Transverse colon (tissue), 4 donors: ENCODE measurements at regions of chr10 and their contacts with region 1.

Region 1: GRCh38 chr10:72364239-72364777 is 9.6 kb upstream of the DNAJB12 start:
- DNase-seq: peak; percentile 86
- H3K4me3 ChIP-seq: no peak overlapping the region
- H3K27ac ChIP-seq: peak overlapping the region in 1 of 4 donors; percentile 31
- H3K4me1 ChIP-seq: peaks cover 0 to 10% (median 5%) of the 10 kb centered on the region in 4 donors
- H3K27me3 ChIP-seq: no peaks in the 10 kb centered on the region
- CTCF ChIP-seq: peak; percentile 84 to 96 (median 88)
- EP300 ChIP-seq: no peak
- POLR2A ChIP-seq: no peak

Region 2: GRCh38 chr10:72079356-72079755 is 285.0 kb before region 1 on chr10:
- in situ Hi-C with region 1: no loop called
- intact Hi-C with region 1: no loop called
- DNase-seq: no peak
- H3K4me3 ChIP-seq: no peak overlapping the region
- H3K27ac ChIP-seq: no peak overlapping the region
- H3K4me1 ChIP-seq: no peaks in the 10 kb centered on the region
- H3K27me3 ChIP-seq: no peaks in the 10 kb centered on the region
- CTCF ChIP-seq: no peak
- EP300 ChIP-seq: no peak
- POLR2A ChIP-seq: no peak

Region 3: GRCh38 chr10:72593963-72594362 is 229.7 kb after region 1 on chr10:
- in situ Hi-C with region 1: no loop called
- intact Hi-C with region 1: no loop called
- DNase-seq: no peak
- H3K4me3 ChIP-seq: no peak overlapping the region
- H3K27ac ChIP-seq: no peak overlapping the region
- H3K4me1 ChIP-seq: peaks cover 0 to 7% (median 0%) of the 10 kb centered on the region in 4 donors
- H3K27me3 ChIP-seq: no peaks in the 10 kb centered on the region
- CTCF ChIP-seq: no peak
- EP300 ChIP-seq: no peak
- POLR2A ChIP-seq: no peak

Region 4: DNA sequence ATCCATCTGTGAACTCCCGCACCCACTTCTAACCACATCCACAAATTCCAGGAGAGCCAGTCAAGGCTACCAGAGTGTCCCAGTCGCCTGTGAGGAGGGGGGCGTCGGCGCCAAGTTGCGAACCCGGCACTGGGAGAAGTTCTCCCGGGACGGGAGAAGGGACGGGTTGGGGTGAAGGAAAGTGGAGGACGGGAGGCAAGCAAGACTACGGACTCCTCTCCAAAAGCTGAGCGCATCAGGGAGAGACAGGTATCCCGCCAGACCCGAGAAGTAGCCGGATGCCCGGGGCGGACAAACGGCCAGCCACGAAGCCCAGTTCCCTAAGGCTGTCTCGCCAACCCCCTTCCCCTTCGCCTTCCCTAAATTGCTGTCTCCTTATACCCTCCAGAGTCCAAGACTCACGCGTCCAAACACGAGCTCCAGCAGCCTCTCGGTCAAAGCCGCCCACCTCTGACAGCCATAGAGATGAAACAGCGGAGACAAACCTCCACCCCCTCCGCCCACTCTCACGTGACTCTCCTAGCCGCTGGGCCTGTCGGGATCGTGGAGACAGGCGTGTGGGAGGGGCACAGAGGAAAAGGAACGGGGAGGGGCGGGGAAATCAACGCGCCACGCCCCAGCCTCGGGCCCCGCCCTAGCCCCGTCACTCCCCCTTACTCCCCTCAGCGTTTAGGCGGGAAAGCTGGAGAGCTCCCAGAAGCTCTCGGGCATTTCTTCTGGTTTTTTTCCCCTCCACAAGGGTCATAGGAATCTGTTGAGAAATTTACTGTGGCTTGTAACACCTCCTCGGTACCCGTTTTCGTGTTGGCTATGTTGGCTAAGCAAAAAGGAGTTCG is 261.5 kb after region 1 on chr10 and contains the start of gene MICU1:
- in situ Hi-C with region 1: no loop called
- intact Hi-C with region 1: loop called (anchors 10 kb)
- DNase-seq: peak; percentile 97
- H3K4me3 ChIP-seq: peak within 1 kb of the TSS; percentile 73 to 98 (median 86)
- H3K27ac ChIP-seq: peak within 1 kb of the TSS; percentile 88 to 90 (median 89)
- H3K4me1 ChIP-seq: peaks cover 5 to 20% (median 12%) of the 10 kb centered on the region in 4 donors
- H3K27me3 ChIP-seq: no peaks in the 10 kb centered on the region
- CTCF ChIP-seq: no peak
- EP300 ChIP-seq: no peak
- POLR2A ChIP-seq: peak; percentile 85
- total RNA-seq, gene MICU1: 25.1 to 41.1 (median 34.9) TPM

Region 5: DNA sequence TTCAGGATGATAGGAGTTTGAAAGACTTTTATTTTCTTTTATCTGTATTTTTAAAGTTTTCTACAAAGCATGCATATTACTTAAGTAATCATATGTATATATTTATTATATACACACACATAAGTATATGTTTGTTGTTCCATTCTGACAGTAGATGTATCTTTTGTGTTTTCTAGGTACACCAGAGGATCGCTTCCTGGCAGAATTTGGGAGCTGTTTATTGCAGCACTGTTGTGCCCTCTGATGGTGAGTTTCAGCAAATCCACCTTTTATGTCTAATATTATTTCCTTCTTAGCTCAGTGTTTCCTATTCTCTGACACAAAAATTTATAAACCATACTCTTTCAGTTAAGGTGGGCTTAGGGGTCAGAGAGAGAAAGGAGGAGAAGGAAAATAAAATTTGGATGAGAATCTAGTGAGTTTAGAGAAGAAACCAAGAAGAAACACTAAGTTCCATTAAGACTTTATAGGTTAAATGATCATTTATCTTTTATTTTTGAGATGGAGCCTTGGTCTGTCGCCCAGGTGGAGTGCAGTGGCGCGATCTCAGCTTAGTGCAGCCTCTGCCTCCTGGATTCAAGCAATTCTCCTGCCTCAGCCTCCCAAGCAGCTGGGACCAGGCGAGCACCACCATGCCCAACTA is 470.0 kb after region 1 on chr10:
- in situ Hi-C with region 1: loop called (anchors 5 to 25 kb)
- intact Hi-C with region 1: loop called (anchors 5 kb)
- DNase-seq: no peak
- H3K4me3 ChIP-seq: no peak overlapping the region
- H3K27ac ChIP-seq: no peak overlapping the region
- H3K4me1 ChIP-seq: peaks cover 0 to 46% (median 0%) of the 10 kb centered on the region in 4 donors
- H3K27me3 ChIP-seq: no peaks in the 10 kb centered on the region
- CTCF ChIP-seq: peak; percentile 52 to 66 (median 53)
- EP300 ChIP-seq: no peak
- POLR2A ChIP-seq: no peak

Region 6: GRCh38 chr10:72875250-72876055 is 511.1 kb after region 1 on chr10:
- in situ Hi-C with region 1: loop called in 1 of 4 experiments (anchors 5 kb)
- intact Hi-C with region 1: no loop called
- DNase-seq: no peak
- H3K4me3 ChIP-seq: no peak overlapping the region
- H3K27ac ChIP-seq: no peak overlapping the region
- H3K4me1 ChIP-seq: no peaks in the 10 kb centered on the region
- H3K27me3 ChIP-seq: no peaks in the 10 kb centered on the region
- CTCF ChIP-seq: peak; percentile 20 to 40 (median 34)
- EP300 ChIP-seq: no peak
- POLR2A ChIP-seq: no peak

Region 7: DNA sequence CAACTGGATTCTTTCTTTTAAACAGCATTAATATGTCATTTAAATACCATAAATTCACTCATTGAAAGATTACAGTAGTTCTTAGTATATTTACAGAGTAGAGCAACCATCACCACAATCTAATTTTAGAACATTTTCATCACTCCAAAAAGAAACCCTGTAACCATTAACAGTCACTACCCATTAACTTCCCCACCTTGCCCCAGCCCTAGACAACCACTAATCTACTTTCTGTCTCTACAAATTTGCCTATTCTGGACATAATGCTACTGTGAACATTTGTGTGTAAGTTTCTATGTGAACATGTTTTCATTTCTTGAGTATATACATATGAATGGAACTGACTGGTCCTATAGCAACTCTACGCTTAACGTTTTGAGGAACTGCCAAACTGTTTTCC is 690.0 kb after region 1 on chr10:
- in situ Hi-C with region 1: loop called in 1 of 4 experiments (anchors 10 kb)
- intact Hi-C with region 1: no loop called
- DNase-seq: no peak
- H3K4me3 ChIP-seq: no peak overlapping the region
- H3K27ac ChIP-seq: no peak overlapping the region
- H3K4me1 ChIP-seq: no peaks in the 10 kb centered on the region
- H3K27me3 ChIP-seq: no peaks in the 10 kb centered on the region
- CTCF ChIP-seq: no peak
- EP300 ChIP-seq: no peak
- POLR2A ChIP-seq: no peak

Region 8: DNA sequence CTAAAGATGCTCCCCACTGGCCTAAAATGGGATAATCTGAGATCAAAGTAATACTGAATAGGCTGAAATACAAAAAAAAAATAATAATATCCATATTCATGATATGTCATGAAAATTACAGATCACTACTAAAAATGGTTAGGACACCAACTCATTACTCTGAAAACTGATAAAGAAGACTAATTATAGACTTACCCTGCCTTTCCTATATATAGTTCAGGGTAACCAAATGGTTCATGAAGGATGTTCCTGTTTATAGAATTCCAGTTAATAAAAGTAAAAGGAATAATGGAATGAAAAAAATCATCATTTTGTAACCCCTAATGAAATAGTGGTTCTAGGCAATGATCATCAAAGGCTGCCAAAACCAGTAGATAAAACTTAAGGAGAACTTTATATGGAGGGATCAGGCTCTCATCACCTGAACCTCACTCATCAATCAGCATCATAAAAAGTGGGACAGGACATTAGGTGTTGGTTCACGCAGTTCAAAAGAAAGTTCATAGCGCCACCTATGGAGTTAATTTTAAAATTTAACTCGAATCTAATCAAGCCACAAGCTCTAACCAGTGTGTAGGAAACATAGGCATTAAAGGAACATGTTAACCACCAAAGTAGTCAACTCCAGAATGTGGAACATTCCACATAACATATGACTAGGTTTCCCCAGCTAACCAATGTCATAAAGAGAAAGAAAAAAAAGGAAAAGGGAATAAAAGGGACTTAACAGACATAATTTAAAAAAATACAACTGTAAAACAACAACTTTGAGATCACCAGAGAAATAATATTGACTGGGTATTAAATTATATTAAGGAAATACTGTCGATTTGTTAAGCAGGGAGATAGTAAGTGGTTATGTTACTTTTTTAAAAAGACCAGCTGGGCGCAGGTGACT is 696.7 kb after region 1 on chr10:
- in situ Hi-C with region 1: loop called in 3 of 4 experiments (anchors 10 kb)
- intact Hi-C with region 1: no loop called
- DNase-seq: no peak
- H3K4me3 ChIP-seq: no peak overlapping the region
- H3K27ac ChIP-seq: no peak overlapping the region
- H3K4me1 ChIP-seq: peaks cover 0 to 5% (median 0%) of the 10 kb centered on the region in 4 donors
- H3K27me3 ChIP-seq: no peaks in the 10 kb centered on the region
- CTCF ChIP-seq: peak; percentile 19 to 37 (median 37)
- EP300 ChIP-seq: no peak
- POLR2A ChIP-seq: no peak

Region 9: DNA sequence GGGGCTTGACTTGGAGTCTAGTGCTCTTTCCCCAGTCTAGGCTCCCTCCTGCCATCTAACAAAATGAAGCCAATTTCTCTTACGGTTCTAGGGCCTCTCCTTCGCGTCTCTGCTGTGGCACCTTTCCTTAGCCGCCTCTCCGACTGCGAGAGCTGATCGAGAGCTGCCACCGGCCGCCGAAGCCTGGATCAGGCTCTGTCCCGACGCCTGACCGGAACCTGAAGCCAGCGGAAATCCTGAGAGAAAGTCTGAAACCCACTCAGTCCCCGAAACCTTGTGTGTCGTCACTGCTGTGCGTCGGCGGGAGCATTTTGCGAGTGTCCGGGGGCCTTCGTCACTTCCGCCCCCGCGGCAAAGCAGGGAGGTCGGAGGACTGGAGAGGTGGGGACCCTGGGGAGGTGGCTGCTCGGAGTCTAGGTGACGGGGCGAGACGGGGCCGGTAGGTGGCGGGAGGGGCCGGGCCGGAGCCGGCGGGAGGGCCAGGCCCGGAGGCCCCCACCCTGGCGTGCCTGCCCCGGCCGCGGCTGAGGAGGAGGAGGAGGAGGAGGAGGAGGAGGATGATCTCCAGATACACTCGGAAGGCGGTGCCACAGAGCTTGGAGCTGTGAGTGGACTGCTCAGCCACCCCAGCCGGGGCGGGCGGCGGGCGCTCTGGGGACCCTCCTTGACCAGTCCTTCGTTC is 803.6 kb after region 1 on chr10 and contains the starts of genes ECD and FAM149B1:
- in situ Hi-C with region 1: loop called in 1 of 4 experiments (anchors 25 kb)
- intact Hi-C with region 1: no loop called
- DNase-seq: peak; percentile 95
- H3K4me3 ChIP-seq: peak within 1 kb of the TSS; percentile 76 to 94 (median 88)
- H3K27ac ChIP-seq: peak within 1 kb of the TSS; percentile 96 to 99 (median 96)
- H3K4me1 ChIP-seq: peaks cover 11 to 49% (median 19%) of the 10 kb centered on the region in 4 donors
- H3K27me3 ChIP-seq: no peaks in the 10 kb centered on the region
- CTCF ChIP-seq: peak in 3 of 5 experiments; percentile 25 to 44 (median 26)
- EP300 ChIP-seq: no peak
- POLR2A ChIP-seq: peak; percentile 96
- total RNA-seq, gene ECD: 6.4 to 27.0 (median 24.7) TPM
- total RNA-seq, gene FAM149B1: 9.7 to 32.0 (median 17.3) TPM